T-cell (primary cell): ENCODE measurements at regions of chr21 and their contacts with region 1.

Region 1: DNA sequence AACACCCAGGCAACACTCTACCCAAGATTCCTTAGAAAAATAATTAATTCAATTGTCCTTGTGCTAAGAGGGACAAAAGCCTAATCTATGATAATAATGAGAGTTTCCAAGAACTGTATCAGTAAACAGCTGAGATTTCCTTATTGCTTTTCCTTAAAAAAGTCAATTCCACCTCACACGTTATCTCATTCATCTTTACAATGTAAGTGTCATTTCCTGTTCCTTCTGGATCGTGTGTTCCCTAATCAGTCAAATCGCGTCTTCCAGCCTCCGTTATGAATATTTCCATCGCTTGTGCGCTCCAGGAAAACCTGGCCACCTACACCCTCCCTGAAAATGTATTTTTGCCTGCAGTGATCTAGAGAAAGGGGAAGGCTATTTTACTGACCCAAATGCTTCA is 23.9 kb upstream of the CLDN17 start:
- DNase-seq: no peak
- ATAC-seq: no peak
- H3K4me3 ChIP-seq: no peak overlapping the region
- H3K4me3 Mint-ChIP-seq: no peak overlapping the region
- H3K27ac ChIP-seq: no peak overlapping the region
- H3K27ac Mint-ChIP-seq: no peak overlapping the region
- H3K4me1 ChIP-seq: no peaks in the 10 kb centered on the region
- H3K4me1 Mint-ChIP-seq: no peaks in the 10 kb centered on the region
- H3K27me3 ChIP-seq: no peaks in the 10 kb centered on the region
- H3K27me3 Mint-ChIP-seq: no peaks in the 10 kb centered on the region

Region 2: DNA sequence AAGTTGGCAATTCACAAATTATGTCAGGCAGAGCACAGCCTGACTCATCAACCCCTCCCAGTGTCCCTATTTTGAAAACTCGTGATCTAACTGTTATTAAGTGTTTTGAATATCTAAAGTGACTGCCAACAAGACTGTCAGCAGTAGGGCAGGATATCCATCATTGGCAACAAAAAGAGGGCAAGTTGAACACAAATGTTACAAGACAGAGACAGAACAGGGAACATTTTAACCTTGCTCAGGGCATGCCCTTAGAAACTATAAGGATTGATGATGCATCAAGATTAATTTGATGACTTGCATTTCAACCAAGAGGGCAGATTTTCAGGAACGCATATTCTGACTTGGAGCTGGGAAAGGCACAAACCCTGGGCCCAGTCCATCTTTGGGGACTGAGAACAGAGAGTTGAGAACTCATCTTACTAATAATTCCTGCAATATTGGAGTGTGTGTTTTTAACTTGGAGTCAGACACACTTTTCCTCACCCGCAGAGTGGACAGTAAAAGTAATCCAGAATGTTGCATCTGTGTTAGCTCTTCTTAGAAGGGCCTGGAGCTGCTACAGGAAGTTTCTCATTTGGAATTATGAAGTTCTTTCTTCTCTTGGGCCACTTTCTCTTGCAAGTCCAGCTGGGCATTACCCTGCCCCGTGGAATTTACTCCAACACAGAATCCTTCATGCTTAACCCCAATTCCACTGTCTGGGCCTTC is 1515.1 kb before region 1 on chr21:
- CTCF ChIA-PET with region 1: no interaction called
- POLR2A ChIA-PET with region 1: interaction called in 1 of 2 experiments, 10 read pairs
- DNase-seq: no peak
- ATAC-seq: no peak
- H3K4me3 ChIP-seq: no peak overlapping the region
- H3K4me3 Mint-ChIP-seq: no peak overlapping the region
- H3K27ac ChIP-seq: no peak overlapping the region
- H3K27ac Mint-ChIP-seq: no peak overlapping the region
- H3K4me1 ChIP-seq: no peaks in the 10 kb centered on the region
- H3K4me1 Mint-ChIP-seq: no peaks in the 10 kb centered on the region
- H3K27me3 ChIP-seq: no peaks in the 10 kb centered on the region
- H3K27me3 Mint-ChIP-seq: no peaks in the 10 kb centered on the region